MCF 10A (cell line): ENCODE measurements at regions of chr19 and their contacts with region 1.

Region 1: GRCh38 chr19:40139533-40140287 is 49.0 kb upstream of the ZNF780A start:
- DNase-seq: peak; percentile 63
- H3K4me3 Mint-ChIP-seq: no peak overlapping the region
- H3K27ac Mint-ChIP-seq: no peak overlapping the region
- H3K4me1 Mint-ChIP-seq: no peaks in the 10 kb centered on the region
- H3K27me3 Mint-ChIP-seq: peaks cover 34% of the 10 kb centered on the region
- CTCF ChIP-seq: peak; percentile 76

Region 2: DNA sequence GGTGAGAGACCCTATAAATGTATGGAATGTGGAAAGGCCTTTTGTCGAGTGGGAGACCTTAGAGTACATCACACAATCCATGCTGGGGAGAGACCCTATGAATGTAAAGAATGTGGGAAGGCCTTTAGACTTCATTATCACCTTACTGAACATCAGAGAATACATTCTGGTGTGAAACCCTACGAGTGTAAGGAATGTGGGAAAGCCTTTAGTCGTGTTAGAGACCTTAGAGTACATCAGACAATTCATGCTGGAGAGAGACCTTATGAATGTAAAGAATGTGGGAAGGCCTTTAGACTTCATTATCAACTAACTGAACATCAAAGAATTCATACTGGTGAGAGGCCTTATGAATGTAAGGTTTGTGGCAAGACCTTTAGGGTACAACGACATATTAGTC is 125.7 kb before region 1 on chr19:
- CTCF ChIA-PET with region 1: no interaction called
- POLR2A ChIA-PET with region 1: no interaction called
- intact Hi-C with region 1: no loop called
- DNase-seq: no peak
- H3K4me3 Mint-ChIP-seq: no peak overlapping the region
- H3K27ac Mint-ChIP-seq: no peak overlapping the region
- H3K4me1 Mint-ChIP-seq: no peaks in the 10 kb centered on the region
- H3K27me3 Mint-ChIP-seq: no peaks in the 10 kb centered on the region
- CTCF ChIP-seq: no peak

Region 3: GRCh38 chr19:40025938-40026596 is 113.6 kb before region 1 on chr19:
- CTCF ChIA-PET with region 1: no interaction called
- POLR2A ChIA-PET with region 1: no interaction called
- intact Hi-C with region 1: no loop called
- DNase-seq: no peak
- H3K4me3 Mint-ChIP-seq: no peak overlapping the region
- H3K27ac Mint-ChIP-seq: no peak overlapping the region
- H3K4me1 Mint-ChIP-seq: no peaks in the 10 kb centered on the region
- H3K27me3 Mint-ChIP-seq: no peaks in the 10 kb centered on the region
- CTCF ChIP-seq: no peak

Region 4: GRCh38 chr19:40055832-40056504 is 83.7 kb before region 1 on chr19 and contains the start of gene ZNF780B:
- CTCF ChIA-PET with region 1: no interaction called
- POLR2A ChIA-PET with region 1: no interaction called
- intact Hi-C with region 1: no loop called
- DNase-seq: peak; percentile 45
- H3K4me3 Mint-ChIP-seq: peak within 1 kb of the TSS; percentile 96
- H3K27ac Mint-ChIP-seq: peak within 1 kb of the TSS; percentile 82
- H3K4me1 Mint-ChIP-seq: peaks cover 5% of the 10 kb centered on the region
- H3K27me3 Mint-ChIP-seq: no peaks in the 10 kb centered on the region
- CTCF ChIP-seq: no peak
- total RNA-seq, gene ZNF780B: 10.2 and 12.8 TPM in 2 replicates

Region 5: GRCh38 chr19:40155749-40156265 is 16.1 kb after region 1 on chr19:
- CTCF ChIA-PET with region 1: interaction called, 10 read pairs
- POLR2A ChIA-PET with region 1: no interaction called
- intact Hi-C with region 1: no loop called
- DNase-seq: peak; percentile 60
- H3K4me3 Mint-ChIP-seq: no peak overlapping the region
- H3K27ac Mint-ChIP-seq: no peak overlapping the region
- H3K4me1 Mint-ChIP-seq: no peaks in the 10 kb centered on the region
- H3K27me3 Mint-ChIP-seq: no peaks in the 10 kb centered on the region
- CTCF ChIP-seq: peak; percentile 17

Region 6: DNA sequence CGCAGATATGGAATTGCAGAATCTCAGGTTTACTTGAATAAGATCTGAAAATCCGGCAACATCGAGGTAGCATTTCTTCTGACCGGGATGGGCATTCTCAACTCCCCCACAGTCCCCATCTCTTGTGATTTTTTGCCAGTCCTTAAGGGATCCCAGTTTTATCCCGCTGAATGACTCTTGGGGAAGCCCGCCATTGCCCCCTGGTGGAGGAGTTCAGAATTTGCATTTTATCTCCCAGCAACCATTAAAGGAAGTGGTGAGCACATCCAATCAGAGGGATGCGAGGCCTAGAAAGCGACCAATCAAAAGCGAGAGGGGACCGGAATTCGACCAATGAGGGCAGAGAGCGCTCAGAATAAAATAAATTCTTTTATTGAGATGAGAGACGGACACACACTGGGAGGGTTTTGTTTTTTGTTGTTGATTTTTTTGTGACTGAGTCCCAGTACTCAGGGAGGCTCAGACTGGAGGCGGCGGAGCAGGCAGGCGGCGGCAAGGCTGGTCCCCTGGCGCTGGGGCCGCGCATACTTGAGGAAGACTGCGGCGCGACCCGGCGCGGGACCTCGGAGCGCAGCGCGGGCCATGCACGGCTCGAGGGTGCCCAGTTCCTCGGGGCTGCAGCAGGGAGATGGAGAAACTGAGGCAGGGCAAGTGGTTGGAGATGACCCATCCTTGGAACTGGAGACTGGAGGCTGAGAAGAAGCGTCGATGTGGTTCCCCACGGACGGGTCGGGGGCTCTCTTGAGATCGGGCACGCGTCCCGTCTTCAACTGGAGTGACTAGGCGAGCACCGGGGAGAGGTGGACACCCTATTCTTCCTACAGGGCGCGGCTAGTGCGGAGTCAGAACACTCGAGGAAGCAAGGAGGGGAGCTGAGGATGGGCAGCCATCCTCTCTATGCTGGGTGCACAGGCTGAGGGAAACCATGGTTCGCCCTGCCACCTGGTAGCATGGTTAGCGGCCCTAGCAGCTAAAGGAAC is 82.4 kb after region 1 on chr19:
- CTCF ChIA-PET with region 1: interaction called, 36 read pairs
- POLR2A ChIA-PET with region 1: no interaction called
- intact Hi-C with region 1: loop called (anchors 1 kb)
- DNase-seq: peak; percentile 93
- H3K4me3 Mint-ChIP-seq: no peak overlapping the region
- H3K27ac Mint-ChIP-seq: no peak overlapping the region
- H3K4me1 Mint-ChIP-seq: peaks cover 39% of the 10 kb centered on the region
- H3K27me3 Mint-ChIP-seq: peaks cover 1% of the 10 kb centered on the region
- CTCF ChIP-seq: peak; percentile 77

Region 7: GRCh38 chr19:40229484-40229883 is 89.8 kb after region 1 on chr19:
- CTCF ChIA-PET with region 1: interaction called, 12 read pairs
- POLR2A ChIA-PET with region 1: no interaction called
- intact Hi-C with region 1: no loop called
- DNase-seq: no peak
- H3K4me3 Mint-ChIP-seq: no peak overlapping the region
- H3K27ac Mint-ChIP-seq: no peak overlapping the region
- H3K4me1 Mint-ChIP-seq: peaks cover 21% of the 10 kb centered on the region
- H3K27me3 Mint-ChIP-seq: no peaks in the 10 kb centered on the region
- CTCF ChIP-seq: no peak

Region 8: GRCh38 chr19:40331069-40331468 is 191.4 kb after region 1 on chr19:
- CTCF ChIA-PET with region 1: no interaction called
- POLR2A ChIA-PET with region 1: no interaction called
- intact Hi-C with region 1: no loop called
- DNase-seq: peak; percentile 76
- H3K4me3 Mint-ChIP-seq: no peak overlapping the region
- H3K27ac Mint-ChIP-seq: peak overlapping the region; percentile 85
- H3K4me1 Mint-ChIP-seq: peaks cover 6% of the 10 kb centered on the region
- H3K27me3 Mint-ChIP-seq: no peaks in the 10 kb centered on the region
- CTCF ChIP-seq: no peak

Region 9: GRCh38 chr19:40529093-40529954 is 389.6 kb after region 1 on chr19:
- CTCF ChIA-PET with region 1: no interaction called
- POLR2A ChIA-PET with region 1: no interaction called
- intact Hi-C with region 1: loop called (anchors 10 kb)
- DNase-seq: peak; percentile 79
- H3K4me3 Mint-ChIP-seq: peak overlapping the region; percentile 64
- H3K27ac Mint-ChIP-seq: no peak overlapping the region
- H3K4me1 Mint-ChIP-seq: peaks cover 14% of the 10 kb centered on the region
- H3K27me3 Mint-ChIP-seq: no peaks in the 10 kb centered on the region
- CTCF ChIP-seq: peak; percentile 95

Region 10: DNA sequence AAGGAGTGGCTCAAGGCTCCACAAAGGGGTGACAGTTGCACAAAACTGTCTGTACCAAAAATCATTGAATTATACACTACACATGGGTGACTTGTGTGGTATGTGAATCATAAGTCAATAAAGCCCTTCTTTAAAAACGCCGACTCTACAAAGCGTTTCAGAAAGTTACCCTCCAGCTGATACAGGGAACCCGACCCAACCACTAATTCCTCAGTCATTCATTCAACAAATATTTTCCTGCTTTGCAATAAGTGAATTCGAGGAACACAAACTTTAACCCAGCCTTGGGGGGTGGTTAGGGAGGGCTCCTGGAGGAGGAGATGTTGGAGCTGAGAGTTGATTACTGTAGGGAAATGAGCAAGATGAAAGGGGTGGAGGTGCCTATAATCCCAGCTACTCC is 493.5 kb after region 1 on chr19:
- CTCF ChIA-PET with region 1: interaction called, 10 read pairs
- POLR2A ChIA-PET with region 1: no interaction called
- intact Hi-C with region 1: loop called (anchors 10 kb)
- DNase-seq: no peak
- H3K4me3 Mint-ChIP-seq: no peak overlapping the region
- H3K27ac Mint-ChIP-seq: no peak overlapping the region
- H3K4me1 Mint-ChIP-seq: peaks cover 6% of the 10 kb centered on the region
- H3K27me3 Mint-ChIP-seq: no peaks in the 10 kb centered on the region
- CTCF ChIP-seq: no peak